RWPE1 (cell line): ENCODE measurements at regions of chr2 and their contacts with region 1.

Region 1: DNA sequence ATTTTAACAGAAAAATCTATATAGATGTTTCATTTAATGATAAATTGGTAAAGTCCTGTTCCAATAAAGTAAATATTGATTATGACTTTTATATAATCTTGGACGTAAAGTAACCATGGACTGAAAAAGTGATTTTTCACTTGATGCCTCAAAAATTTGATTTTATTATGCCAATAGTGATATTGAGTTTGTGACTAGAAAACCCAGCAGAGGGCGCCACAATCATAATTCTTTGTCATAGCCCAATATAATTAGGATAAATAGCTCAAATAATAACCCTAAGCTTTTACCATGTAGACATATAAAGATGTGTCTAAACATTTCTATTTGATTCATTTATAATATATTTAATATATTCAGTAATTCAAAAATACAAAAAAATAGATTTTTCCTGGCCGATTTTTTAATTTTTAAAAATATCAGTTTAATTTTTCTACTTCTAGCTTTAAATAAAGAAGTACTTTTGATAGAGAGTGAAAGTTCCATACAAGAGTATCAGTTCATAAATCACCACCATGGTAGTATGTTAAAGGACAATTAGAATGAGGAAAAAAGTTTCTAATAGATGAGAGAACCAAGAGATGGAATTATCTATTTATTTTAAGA is 30.7 kb downstream of the CAMKMT start:
- DNase-seq: peak; percentile 11
- H3K27ac ChIP-seq: no peak overlapping the region
- CTCF ChIP-seq: peak; percentile 59

Region 2: GRCh38 chr2:44715671-44716081 is 323.2 kb after region 1 on chr2:
- CTCF ChIA-PET with region 1: interaction called, 12 read pairs
- POLR2A ChIA-PET with region 1: no interaction called
- DNase-seq: peak; percentile 48
- H3K27ac ChIP-seq: no peak overlapping the region
- CTCF ChIP-seq: peak; percentile 37

Region 3: GRCh38 chr2:44955593-44956392 is 563.4 kb after region 1 on chr2:
- CTCF ChIA-PET with region 1: interaction called, 13 read pairs
- POLR2A ChIA-PET with region 1: no interaction called
- DNase-seq: peak; percentile 77
- H3K27ac ChIP-seq: no peak overlapping the region
- CTCF ChIP-seq: peak; percentile 91